AG04450 (cell line): ENCODE measurements at regions of chr3 and their contacts with region 1.

Region 1: DNA sequence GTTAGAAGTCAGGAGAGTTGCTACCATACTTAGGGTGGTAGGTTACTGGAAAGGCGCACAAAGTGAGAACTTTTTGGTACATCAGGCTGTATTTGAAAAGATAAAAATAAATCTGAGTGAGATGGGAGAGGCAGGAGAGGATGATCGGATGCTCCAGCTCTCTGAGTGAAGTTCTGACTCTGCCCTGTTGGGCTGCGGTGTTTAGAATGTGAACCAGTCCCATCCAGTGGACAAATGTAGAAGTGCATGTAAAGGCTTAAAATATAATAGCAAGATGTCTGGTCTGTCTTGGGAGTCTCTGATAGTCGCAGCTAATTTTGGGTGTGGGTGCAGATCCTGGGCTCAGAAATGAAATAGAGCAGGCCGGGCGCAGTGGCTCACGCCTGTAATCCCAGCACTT is 30.4 kb downstream of the ACKR2 start:
- DNase-seq: peak; percentile 42
- H3K4me3 ChIP-seq: peak overlapping the region; percentile 36
- H3K27ac ChIP-seq: no peak overlapping the region
- H3K27me3 ChIP-seq: peaks cover 16% of the 10 kb centered on the region
- CTCF ChIP-seq: peak; percentile 85

Region 2: GRCh38 chr3:42772670-42773408 is 66.8 kb before region 1 on chr3 and contains the start of gene CCDC13:
- CTCF ChIA-PET with region 1: interaction called, 12 read pairs
- POLR2A ChIA-PET with region 1: no interaction called
- DNase-seq: peak; percentile 15
- H3K4me3 ChIP-seq: peak within 1 kb of the TSS; percentile 59
- H3K27ac ChIP-seq: no peak within 1 kb of the TSS
- H3K27me3 ChIP-seq: no peaks in the 10 kb centered on the region
- CTCF ChIP-seq: no peak
- polyA plus RNA-seq, gene CCDC13: 0.20 TPM in 1 of 2 replicates, not detected in the other

Region 3: DNA sequence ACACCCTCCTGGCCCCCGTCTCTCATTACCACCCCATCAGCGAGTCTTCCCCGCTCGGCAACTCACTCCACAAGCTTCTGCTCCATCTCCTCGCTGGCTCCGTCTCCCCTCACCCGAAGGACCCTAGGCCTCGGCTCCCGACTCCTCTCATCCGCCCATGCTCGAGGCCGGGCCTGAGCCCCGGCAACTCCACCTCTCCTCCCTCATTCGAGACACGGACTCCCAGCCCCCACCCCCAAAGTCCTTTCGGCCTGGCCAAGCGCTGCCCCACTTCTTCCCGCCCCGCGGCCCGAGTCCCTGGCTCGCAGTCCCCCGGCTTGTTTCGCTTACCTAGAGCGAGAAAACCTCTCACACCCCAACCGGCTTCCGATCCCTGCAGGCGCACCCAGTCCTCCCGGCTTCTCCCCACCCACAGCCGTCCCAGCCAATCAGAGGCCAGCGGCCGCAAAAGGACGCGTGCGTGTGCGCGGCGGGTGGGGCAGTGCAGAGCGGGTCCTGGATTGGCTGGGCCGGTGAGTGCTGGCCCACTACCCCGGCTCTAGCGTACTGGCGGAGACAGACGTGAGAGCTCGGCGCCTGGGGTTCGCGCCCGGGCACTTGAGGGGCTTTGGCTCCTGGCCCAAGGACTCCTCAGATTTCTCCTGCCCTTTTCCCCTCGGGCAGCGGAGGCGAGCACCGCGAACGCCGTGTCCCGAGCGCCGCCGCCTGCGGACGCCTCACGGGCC is 35.3 kb before region 1 on chr3 and contains the start of gene HIGD1A:
- CTCF ChIA-PET with region 1: interaction called, 10 read pairs
- POLR2A ChIA-PET with region 1: no interaction called
- DNase-seq: peak; percentile 81
- H3K4me3 ChIP-seq: peak within 1 kb of the TSS; percentile 85
- H3K27ac ChIP-seq: peak within 1 kb of the TSS; percentile 85
- H3K27me3 ChIP-seq: peaks cover 4% of the 10 kb centered on the region
- CTCF ChIP-seq: no peak
- polyA plus RNA-seq, gene HIGD1A: 158 and 225 TPM in 2 replicates